Aorta (tissue), 5 donors: ENCODE measurements at regions of chr1 and their contacts with region 1.

Region 1: GRCh38 chr1:63773815-63774616 is at the start of gene ROR1:
- DNase-seq: peak; percentile 93 to 96
- ATAC-seq: peak; percentile 96
- H3K4me3 ChIP-seq: peak within 1 kb of the TSS; percentile 77 to 95
- H3K27ac ChIP-seq: peak within 1 kb of the TSS; percentile 65 to 99
- H3K4me1 ChIP-seq: no peaks in the 10 kb centered on the region
- H3K27me3 ChIP-seq: no peaks in the 10 kb centered on the region
- total RNA-seq, gene ROR1: 18.7 to 30.9 TPM

Region 2: GRCh38 chr1:63294803-63295594 is 479.0 kb before region 1 on chr1:
- intact Hi-C with region 1: no loop called
- DNase-seq: no peak
- ATAC-seq: no peak
- H3K4me3 ChIP-seq: no peak overlapping the region
- H3K27ac ChIP-seq: no peak overlapping the region
- H3K4me1 ChIP-seq: no peaks in the 10 kb centered on the region
- H3K27me3 ChIP-seq: no peaks in the 10 kb centered on the region

Region 3: GRCh38 chr1:63615768-63616420 is 158.1 kb before region 1 on chr1:
- intact Hi-C with region 1: loop called in 1 of 2 experiments (anchors 5 kb)
- DNase-seq: peak in 1 of 2 donors; percentile 47
- ATAC-seq: peak; percentile 87
- H3K4me3 ChIP-seq: no peak overlapping the region
- H3K27ac ChIP-seq: no peak overlapping the region
- H3K4me1 ChIP-seq: peaks cover 6 to 7% of the 10 kb centered on the region in 2 donors
- H3K27me3 ChIP-seq: no peaks in the 10 kb centered on the region

Region 4: GRCh38 chr1:63859480-63860270 is 85.7 kb after region 1 on chr1:
- intact Hi-C with region 1: loop called in 1 of 2 experiments (anchors 10 kb)
- DNase-seq: no peak
- ATAC-seq: no peak
- H3K4me3 ChIP-seq: no peak overlapping the region
- H3K27ac ChIP-seq: no peak overlapping the region
- H3K4me1 ChIP-seq: peaks cover 6 to 14% of the 10 kb centered on the region in 2 donors
- H3K27me3 ChIP-seq: no peaks in the 10 kb centered on the region

Region 5: DNA sequence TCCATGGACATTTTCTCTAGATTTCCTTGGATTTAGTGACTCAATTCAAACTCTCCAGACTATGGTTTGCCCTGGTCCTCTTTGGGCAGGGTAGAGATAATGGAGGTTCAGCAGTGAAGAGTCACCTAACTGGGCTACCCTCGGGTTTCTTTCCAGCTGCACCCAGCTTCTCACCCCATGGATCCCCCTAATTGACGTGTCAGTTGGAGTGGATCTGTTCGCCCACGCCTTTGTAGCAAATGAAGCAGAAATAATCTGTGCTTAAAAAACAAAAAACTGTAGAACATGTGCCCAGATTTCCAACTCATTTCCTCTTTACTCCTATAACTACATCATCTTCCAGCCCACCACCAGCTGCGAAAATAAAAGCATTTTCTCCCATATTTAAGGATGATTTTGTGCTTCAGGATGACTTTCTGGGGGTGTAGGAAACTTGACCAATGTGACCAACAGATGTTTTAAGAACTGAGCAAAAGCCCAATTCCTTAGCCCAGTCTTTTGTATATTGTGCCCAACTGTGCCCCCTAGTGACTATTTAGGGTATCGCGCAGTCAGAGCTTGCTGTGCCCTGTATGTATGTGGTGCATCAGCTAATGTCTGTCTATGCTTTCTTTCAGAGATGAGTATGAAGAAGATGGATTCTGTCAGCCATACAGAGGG is 362.9 kb after region 1 on chr1:
- intact Hi-C with region 1: loop called (anchors 5 kb)
- DNase-seq: peak; percentile 73 to 86
- ATAC-seq: peak; percentile 93
- H3K4me3 ChIP-seq: no peak overlapping the region
- H3K27ac ChIP-seq: no peak overlapping the region
- H3K4me1 ChIP-seq: peaks cover 0 to 4% of the 10 kb centered on the region in 2 donors
- H3K27me3 ChIP-seq: no peaks in the 10 kb centered on the region

Region 6: GRCh38 chr1:64242895-64243756 is 469.1 kb after region 1 on chr1:
- intact Hi-C with region 1: loop called (anchors 5 to 10 kb)
- DNase-seq: no peak
- ATAC-seq: no peak
- H3K4me3 ChIP-seq: no peak overlapping the region
- H3K27ac ChIP-seq: no peak overlapping the region
- H3K4me1 ChIP-seq: no peaks in the 10 kb centered on the region
- H3K27me3 ChIP-seq: no peaks in the 10 kb centered on the region